Heart left ventricle (tissue), 16 donors: ENCODE measurements at regions of chr4 and their contacts with region 1.

Region 1: GRCh38 chr4:161404346-161405110 is 759.3 kb downstream of the FSTL5 start:
- DNase-seq: no peak
- ATAC-seq: no peak
- H3K4me3 ChIP-seq: no peak overlapping the region
- H3K27ac ChIP-seq: no peak overlapping the region
- H3K4me1 ChIP-seq: no peaks in the 10 kb centered on the region
- H3K27me3 ChIP-seq: no peaks in the 10 kb centered on the region
- CTCF ChIP-seq: no peak
- POLR2A ChIP-seq: no peak

Region 2: GRCh38 chr4:161442921-161443320 is 38.4 kb after region 1 on chr4:
- intact Hi-C with region 1: no loop called
- DNase-seq: no peak
- ATAC-seq: no peak
- H3K4me3 ChIP-seq: no peak overlapping the region
- H3K27ac ChIP-seq: no peak overlapping the region
- H3K4me1 ChIP-seq: no peaks in the 10 kb centered on the region
- H3K27me3 ChIP-seq: no peaks in the 10 kb centered on the region
- CTCF ChIP-seq: no peak
- POLR2A ChIP-seq: no peak

Region 3: GRCh38 chr4:161604516-161605300 is 200.2 kb after region 1 on chr4:
- intact Hi-C with region 1: loop called in 1 of 10 experiments (anchors 5 kb)
- DNase-seq: no peak
- ATAC-seq: no peak
- H3K4me3 ChIP-seq: no peak overlapping the region
- H3K27ac ChIP-seq: no peak overlapping the region
- H3K4me1 ChIP-seq: no peaks in the 10 kb centered on the region
- H3K27me3 ChIP-seq: no peaks in the 10 kb centered on the region
- CTCF ChIP-seq: no peak
- POLR2A ChIP-seq: no peak